ENCODE measurements at regions of chr7 and their contacts with region 1.

Region 1: DNA sequence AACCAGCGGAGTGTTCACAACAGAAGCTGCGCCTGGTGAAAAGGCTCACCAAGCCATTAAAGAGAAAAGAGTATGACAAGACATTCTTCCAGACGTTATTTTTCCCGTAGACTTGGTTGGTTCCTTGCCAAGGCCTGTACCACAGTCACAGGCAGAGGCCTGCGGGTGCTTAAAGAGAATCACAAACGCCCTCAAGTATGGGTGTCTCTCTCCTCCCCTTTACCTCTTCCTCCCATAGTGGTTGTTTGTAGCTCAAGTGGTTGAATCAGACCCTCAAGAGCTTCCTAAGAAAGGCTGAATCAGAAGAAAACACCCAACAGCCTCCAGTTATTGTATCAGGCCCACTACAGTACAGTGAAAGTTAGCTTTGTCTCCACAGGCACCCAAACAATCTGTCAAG is 169.0 kb downstream of the CREB5 start:
- DNase-seq: no peak
- H3K4me3 ChIP-seq: no peak overlapping the region
- H3K27ac ChIP-seq: no peak overlapping the region
- H3K4me1 ChIP-seq: peaks cover 5% of the 10 kb centered on the region
- H3K27me3 ChIP-seq: peaks cover 17% of the 10 kb centered on the region; the same call in 1 of the 2 replicates
- CTCF ChIP-seq: no peak

Region 2: DNA sequence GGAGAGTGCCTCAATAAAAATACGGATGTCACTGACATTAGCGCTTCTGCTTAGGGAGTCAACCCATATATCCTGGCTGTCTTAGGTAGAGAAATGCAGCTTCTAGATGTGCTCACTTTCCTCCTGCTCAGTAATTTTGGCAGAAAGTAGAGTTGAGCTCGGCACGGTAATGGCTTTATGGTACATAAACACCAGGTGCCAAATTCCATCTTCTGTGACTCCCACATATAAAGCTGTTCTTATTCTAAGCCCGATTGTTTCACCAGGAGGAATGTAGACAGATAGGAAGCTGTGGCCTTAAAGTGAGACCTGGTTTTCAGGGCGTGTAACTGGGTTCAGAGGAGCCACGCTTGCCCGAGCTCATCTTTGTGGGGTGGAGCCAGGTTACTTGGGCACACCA is 25.3 kb before region 1 on chr7:
- CTCF ChIA-PET with region 1: interaction called, 25 read pairs
- POLR2A ChIA-PET with region 1: no interaction called
- intact Hi-C with region 1: no loop called
- DNase-seq: no peak
- H3K4me3 ChIP-seq: no peak overlapping the region
- H3K27ac ChIP-seq: no peak overlapping the region
- H3K4me1 ChIP-seq: peaks cover 13% of the 10 kb centered on the region
- H3K27me3 ChIP-seq: no peaks in the 10 kb centered on the region
- CTCF ChIP-seq: no peak

Region 3: GRCh38 chr7:28641752-28642545 is 60.6 kb after region 1 on chr7:
- CTCF ChIA-PET with region 1: no interaction called
- POLR2A ChIA-PET with region 1: interaction called, 12 read pairs
- intact Hi-C with region 1: no loop called
- DNase-seq: no peak
- H3K4me3 ChIP-seq: no peak overlapping the region
- H3K27ac ChIP-seq: no peak overlapping the region
- H3K4me1 ChIP-seq: no peaks in the 10 kb centered on the region
- H3K27me3 ChIP-seq: no peaks in the 10 kb centered on the region
- CTCF ChIP-seq: no peak

Region 4: GRCh38 chr7:29057046-29057445 is 475.7 kb after region 1 on chr7:
- CTCF ChIA-PET with region 1: no interaction called
- POLR2A ChIA-PET with region 1: no interaction called
- intact Hi-C with region 1: no loop called
- DNase-seq: no peak
- H3K4me3 ChIP-seq: no peak overlapping the region
- H3K27ac ChIP-seq: no peak overlapping the region
- H3K4me1 ChIP-seq: no peaks in the 10 kb centered on the region
- H3K27me3 ChIP-seq: peaks cover 4% of the 10 kb centered on the region; the same call in 1 of the 2 replicates
- CTCF ChIP-seq: no peak